Activated CD4-positive, alpha-beta T cell treated with anti-CD3 and anti-CD28 coated beads, Interleukin-2, amount 10 ng/mL, durations not matched to agents 24 days and 14 days (primary cell): ENCODE measurements at regions of chr10 and their contacts with region 1.

Region 1: GRCh38 chr10:43396928-43397624 is 11.9 kb downstream of the HNRNPF start:
- DNase-seq: peak; percentile 95
- H3K4me3 Mint-ChIP-seq: peak overlapping the region; percentile 90
- H3K27ac Mint-ChIP-seq: peak overlapping the region; percentile 93
- H3K4me1 Mint-ChIP-seq: peaks cover 72% of the 10 kb centered on the region
- H3K27me3 Mint-ChIP-seq: no peaks in the 10 kb centered on the region

Region 2: GRCh38 chr10:42801135-42801534 is 595.9 kb before region 1 on chr10:
- intact Hi-C with region 1: loop called (anchors 5 kb)
- DNase-seq: no peak
- H3K4me3 Mint-ChIP-seq: no peak overlapping the region
- H3K27ac Mint-ChIP-seq: peak overlapping the region; percentile 73
- H3K4me1 Mint-ChIP-seq: peaks cover 6% of the 10 kb centered on the region
- H3K27me3 Mint-ChIP-seq: no peaks in the 10 kb centered on the region

Region 3: DNA sequence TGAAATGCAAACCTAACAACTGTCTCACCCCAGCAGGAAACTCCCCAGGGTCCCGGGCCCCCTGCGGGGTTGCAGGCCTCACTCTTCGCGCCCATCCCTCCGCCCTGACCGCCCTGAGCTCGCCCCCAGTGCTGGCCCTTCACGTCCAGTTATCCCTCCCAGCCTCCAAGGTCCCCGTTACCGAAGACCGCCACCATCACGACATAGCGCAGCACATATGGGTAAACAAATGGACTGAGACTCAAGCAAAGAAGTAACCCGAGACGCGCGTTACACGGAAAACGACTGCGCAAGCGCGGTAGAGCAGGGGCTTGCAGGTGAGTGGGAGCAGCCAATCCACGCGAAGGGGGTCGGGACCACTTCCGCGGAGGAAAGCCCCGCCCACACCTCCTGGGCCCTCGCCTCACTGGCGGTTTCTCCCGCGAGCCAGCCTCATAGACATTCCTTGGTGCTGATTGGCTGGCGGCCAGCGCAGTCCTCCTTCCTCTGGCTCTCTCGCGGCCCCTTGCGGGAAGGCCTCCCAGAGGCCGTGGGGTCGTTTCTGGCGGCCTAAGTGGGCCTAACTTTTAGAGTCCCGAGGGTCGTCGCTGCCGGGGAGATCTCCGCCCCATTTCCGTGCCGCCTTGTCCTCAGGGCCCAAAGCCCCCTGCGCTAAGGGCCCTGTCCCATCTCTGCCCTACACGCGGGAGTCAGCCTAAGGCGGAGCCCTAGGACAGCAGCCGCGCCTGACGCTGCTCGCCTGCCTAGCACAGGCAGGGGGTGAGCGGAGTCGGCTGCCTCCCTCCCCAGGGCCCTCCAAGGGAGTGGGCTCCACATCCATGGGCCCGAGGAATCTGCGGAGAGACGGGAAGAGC is 34.9 kb before region 1 on chr10:
- intact Hi-C with region 1: loop called (anchors 2 kb)
- DNase-seq: peak; percentile 99
- H3K4me3 Mint-ChIP-seq: peak overlapping the region; percentile 99
- H3K27ac Mint-ChIP-seq: peak overlapping the region; percentile 99
- H3K4me1 Mint-ChIP-seq: peaks cover 25% of the 10 kb centered on the region
- H3K27me3 Mint-ChIP-seq: no peaks in the 10 kb centered on the region

Region 4: GRCh38 chr10:43420369-43421200 is 23.5 kb after region 1 on chr10:
- intact Hi-C with region 1: loop called (anchors 1 kb)
- DNase-seq: peak; percentile 95
- H3K4me3 Mint-ChIP-seq: peak overlapping the region; percentile 88
- H3K27ac Mint-ChIP-seq: peak overlapping the region; percentile 99
- H3K4me1 Mint-ChIP-seq: peaks cover 36% of the 10 kb centered on the region
- H3K27me3 Mint-ChIP-seq: no peaks in the 10 kb centered on the region

Region 5: GRCh38 chr10:43436400-43437140 is 39.5 kb after region 1 on chr10 and contains the start of gene ZNF487:
- intact Hi-C with region 1: loop called (anchors 1 kb)
- DNase-seq: peak; percentile 98
- H3K4me3 Mint-ChIP-seq: peak within 1 kb of the TSS; percentile 95
- H3K27ac Mint-ChIP-seq: peak within 1 kb of the TSS; percentile 99
- H3K4me1 Mint-ChIP-seq: peaks cover 13% of the 10 kb centered on the region
- H3K27me3 Mint-ChIP-seq: no peaks in the 10 kb centered on the region
- total RNA-seq, gene ZNF487: 1.5 and 1.6 TPM in 2 replicates